MCF 10A (cell line): ENCODE measurements at regions of chr18 and their contacts with region 1.

Region 1: DNA sequence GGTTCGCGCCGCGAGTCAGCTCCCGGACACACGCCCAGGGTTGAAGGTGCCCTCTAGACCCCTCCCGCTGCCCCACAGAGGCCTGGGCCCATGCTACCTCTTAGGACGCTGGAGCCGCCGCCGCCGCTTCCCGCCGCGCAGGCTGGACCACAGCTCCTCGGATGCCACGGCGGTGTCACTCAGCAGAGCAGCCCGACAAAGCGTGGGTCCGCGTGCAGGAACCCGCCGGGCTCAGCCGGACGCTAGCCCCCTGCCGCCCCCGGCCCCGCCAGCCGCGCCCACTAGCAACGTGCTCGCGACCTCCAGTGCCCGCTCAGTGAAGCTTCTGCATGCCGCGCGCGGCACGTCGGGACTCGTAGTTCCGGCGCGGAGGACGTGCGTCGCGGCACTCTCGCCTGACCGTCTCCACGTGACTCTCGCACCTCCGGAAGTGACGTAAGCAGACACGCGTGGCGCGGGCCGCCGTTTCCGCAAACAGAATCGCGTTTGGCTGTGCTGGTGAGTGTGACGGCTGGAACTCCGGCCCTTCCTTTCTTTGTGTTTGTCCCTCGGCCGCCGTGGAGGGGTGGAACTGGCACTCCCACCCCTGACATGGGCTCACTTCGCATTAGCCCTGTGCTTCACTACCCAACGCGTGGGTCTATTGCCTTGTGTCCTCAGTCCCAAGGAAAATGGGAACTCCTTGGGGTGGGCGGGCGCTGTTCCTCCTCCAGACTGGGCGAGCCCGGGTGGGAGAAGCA is at the starts of genes FAM210A and RNMT:
- DNase-seq: peak; percentile 92
- H3K4me3 Mint-ChIP-seq: peak within 1 kb of the TSS; percentile 89
- H3K27ac Mint-ChIP-seq: peak within 1 kb of the TSS; percentile 98
- H3K4me1 Mint-ChIP-seq: peaks cover 29% of the 10 kb centered on the region
- H3K27me3 Mint-ChIP-seq: no peaks in the 10 kb centered on the region
- CTCF ChIP-seq: no peak
- total RNA-seq, gene FAM210A: 31.2 and 35.5 TPM in 2 replicates
- total RNA-seq, gene RNMT: 38.4 and 53.0 TPM in 2 replicates

Region 2: DNA sequence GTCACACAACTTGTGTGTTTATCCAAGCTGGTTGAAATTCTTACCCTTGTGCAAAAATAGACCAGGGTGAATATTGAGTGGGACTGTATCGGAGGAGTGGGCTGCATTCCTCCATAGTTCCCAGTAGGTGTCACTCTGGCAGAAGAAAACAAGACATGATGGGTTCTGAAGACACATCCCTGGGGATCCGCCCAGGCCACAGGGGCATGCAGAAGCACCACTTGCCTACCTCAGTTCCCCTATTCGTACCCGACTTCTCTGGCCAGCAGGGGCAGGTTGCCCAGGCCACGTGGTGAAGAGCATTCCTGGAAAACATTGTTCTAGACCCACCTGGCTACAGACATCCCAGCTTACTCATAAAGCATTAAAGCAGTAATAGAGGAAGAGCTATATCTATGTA is 168.3 kb before region 1 on chr18:
- CTCF ChIA-PET with region 1: interaction called, 4 read pairs
- POLR2A ChIA-PET with region 1: no interaction called
- intact Hi-C with region 1: loop called (anchors 10 kb)
- DNase-seq: peak; percentile 48
- H3K4me3 Mint-ChIP-seq: no peak overlapping the region
- H3K27ac Mint-ChIP-seq: no peak overlapping the region
- H3K4me1 Mint-ChIP-seq: no peaks in the 10 kb centered on the region
- H3K27me3 Mint-ChIP-seq: peaks cover 30% of the 10 kb centered on the region
- CTCF ChIP-seq: peak; percentile 51

Region 3: GRCh38 chr18:13680612-13681011 is 45.8 kb before region 1 on chr18:
- CTCF ChIA-PET with region 1: no interaction called
- POLR2A ChIA-PET with region 1: interaction called, 4 read pairs
- intact Hi-C with region 1: loop called (anchors 5 kb)
- DNase-seq: peak; percentile 33
- H3K4me3 Mint-ChIP-seq: no peak overlapping the region
- H3K27ac Mint-ChIP-seq: no peak overlapping the region
- H3K4me1 Mint-ChIP-seq: peaks cover 3% of the 10 kb centered on the region
- H3K27me3 Mint-ChIP-seq: no peaks in the 10 kb centered on the region
- CTCF ChIP-seq: peak; percentile 10

Region 4: DNA sequence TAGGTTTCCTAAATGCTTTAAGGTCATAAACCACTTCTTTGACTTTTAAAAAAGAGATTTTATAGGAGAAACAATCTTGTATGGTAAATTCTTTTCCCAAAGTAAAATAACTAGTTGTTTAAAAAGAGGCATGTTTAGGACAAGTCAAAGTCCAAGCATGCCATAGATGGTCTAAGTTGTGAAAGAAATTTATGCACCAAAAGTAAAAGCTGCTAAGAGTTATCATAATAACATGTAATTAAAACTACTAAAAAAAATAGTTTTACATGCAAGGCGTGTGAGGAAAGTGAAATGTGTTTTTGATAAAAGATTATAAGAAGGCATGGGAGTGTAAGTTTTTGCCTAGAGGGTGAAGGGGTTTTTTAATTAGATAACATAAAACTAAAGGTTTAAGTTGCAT is 22.5 kb before region 1 on chr18:
- CTCF ChIA-PET with region 1: no interaction called
- POLR2A ChIA-PET with region 1: interaction called, 108 read pairs
- intact Hi-C with region 1: no loop called
- DNase-seq: peak; percentile 36
- H3K4me3 Mint-ChIP-seq: no peak overlapping the region
- H3K27ac Mint-ChIP-seq: no peak overlapping the region
- H3K4me1 Mint-ChIP-seq: no peaks in the 10 kb centered on the region
- H3K27me3 Mint-ChIP-seq: no peaks in the 10 kb centered on the region
- CTCF ChIP-seq: no peak

Region 5: DNA sequence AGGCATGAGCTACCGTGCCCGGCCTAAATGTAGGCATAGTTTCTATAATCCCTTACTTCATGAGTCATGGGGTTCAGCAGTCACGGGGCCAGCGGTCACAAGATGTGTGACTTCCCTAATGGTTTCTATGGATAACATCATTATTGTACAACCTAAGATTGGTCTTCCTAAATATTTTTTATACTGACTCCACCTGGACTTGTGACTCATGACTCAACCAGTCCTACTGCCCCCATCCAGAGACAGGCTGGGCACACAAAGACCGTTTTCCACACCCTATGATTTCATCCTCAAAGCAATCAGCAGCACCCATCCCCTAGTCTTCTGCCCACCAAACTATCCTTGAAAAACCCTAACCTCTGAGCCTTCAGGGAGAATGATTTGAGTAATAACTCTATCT is 15.9 kb before region 1 on chr18:
- CTCF ChIA-PET with region 1: interaction called, 3 read pairs
- POLR2A ChIA-PET with region 1: interaction called, 108 read pairs
- intact Hi-C with region 1: loop called (anchors 1 kb)
- DNase-seq: peak; percentile 64
- H3K4me3 Mint-ChIP-seq: peak overlapping the region; percentile 8
- H3K27ac Mint-ChIP-seq: peak overlapping the region; percentile 91
- H3K4me1 Mint-ChIP-seq: peaks cover 38% of the 10 kb centered on the region
- H3K27me3 Mint-ChIP-seq: no peaks in the 10 kb centered on the region
- CTCF ChIP-seq: no peak

Region 6: DNA sequence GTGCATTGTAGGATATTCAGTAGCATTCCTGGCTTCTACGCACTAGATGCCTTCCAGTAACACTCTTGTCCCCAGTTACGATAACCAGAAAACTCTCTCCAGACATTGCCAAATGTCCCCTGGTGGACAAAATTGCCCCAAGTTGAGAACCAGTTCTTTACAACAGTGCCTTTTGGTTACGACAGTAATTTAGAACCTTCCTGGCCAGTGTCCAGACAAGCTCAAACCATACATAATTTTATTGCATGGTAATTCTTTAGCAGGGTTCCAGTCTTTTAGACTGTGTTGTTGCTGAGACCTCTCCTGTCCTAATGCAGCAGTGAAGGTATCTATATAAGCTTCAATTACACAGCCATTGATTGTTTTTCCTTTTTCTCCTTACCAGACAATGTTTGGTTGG is 20.2 kb after region 1 on chr18:
- CTCF ChIA-PET with region 1: no interaction called
- POLR2A ChIA-PET with region 1: interaction called, 11 read pairs
- intact Hi-C with region 1: no loop called
- DNase-seq: no peak
- H3K4me3 Mint-ChIP-seq: no peak overlapping the region
- H3K27ac Mint-ChIP-seq: no peak overlapping the region
- H3K4me1 Mint-ChIP-seq: no peaks in the 10 kb centered on the region
- H3K27me3 Mint-ChIP-seq: no peaks in the 10 kb centered on the region
- CTCF ChIP-seq: no peak

Region 7: DNA sequence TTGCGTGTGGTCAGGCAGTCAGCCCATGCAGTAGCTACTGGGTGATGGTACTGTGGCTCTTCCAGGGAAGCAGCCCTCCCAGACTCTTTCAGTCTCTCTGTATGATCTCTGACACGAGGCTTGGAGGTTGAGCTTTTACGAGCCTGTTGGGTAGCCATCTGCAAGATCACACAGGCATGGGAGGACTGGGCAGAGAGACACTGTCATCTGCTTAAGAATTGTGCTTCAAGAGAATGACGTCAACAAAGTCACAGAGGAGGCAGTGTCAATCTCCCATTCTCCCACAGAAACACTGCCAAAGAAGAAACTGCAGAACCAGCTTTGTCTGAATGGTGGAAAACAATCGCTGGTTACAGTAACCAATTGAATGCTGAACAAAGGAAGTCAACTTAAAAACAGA is 267.3 kb after region 1 on chr18:
- CTCF ChIA-PET with region 1: no interaction called
- POLR2A ChIA-PET with region 1: no interaction called
- intact Hi-C with region 1: no loop called
- DNase-seq: no peak
- H3K4me3 Mint-ChIP-seq: no peak overlapping the region
- H3K27ac Mint-ChIP-seq: no peak overlapping the region
- H3K4me1 Mint-ChIP-seq: no peaks in the 10 kb centered on the region
- H3K27me3 Mint-ChIP-seq: no peaks in the 10 kb centered on the region
- CTCF ChIP-seq: no peak